SK-N-SH (cell line): ENCODE measurements at regions of chr19 and their contacts with region 1.

Region 1: DNA sequence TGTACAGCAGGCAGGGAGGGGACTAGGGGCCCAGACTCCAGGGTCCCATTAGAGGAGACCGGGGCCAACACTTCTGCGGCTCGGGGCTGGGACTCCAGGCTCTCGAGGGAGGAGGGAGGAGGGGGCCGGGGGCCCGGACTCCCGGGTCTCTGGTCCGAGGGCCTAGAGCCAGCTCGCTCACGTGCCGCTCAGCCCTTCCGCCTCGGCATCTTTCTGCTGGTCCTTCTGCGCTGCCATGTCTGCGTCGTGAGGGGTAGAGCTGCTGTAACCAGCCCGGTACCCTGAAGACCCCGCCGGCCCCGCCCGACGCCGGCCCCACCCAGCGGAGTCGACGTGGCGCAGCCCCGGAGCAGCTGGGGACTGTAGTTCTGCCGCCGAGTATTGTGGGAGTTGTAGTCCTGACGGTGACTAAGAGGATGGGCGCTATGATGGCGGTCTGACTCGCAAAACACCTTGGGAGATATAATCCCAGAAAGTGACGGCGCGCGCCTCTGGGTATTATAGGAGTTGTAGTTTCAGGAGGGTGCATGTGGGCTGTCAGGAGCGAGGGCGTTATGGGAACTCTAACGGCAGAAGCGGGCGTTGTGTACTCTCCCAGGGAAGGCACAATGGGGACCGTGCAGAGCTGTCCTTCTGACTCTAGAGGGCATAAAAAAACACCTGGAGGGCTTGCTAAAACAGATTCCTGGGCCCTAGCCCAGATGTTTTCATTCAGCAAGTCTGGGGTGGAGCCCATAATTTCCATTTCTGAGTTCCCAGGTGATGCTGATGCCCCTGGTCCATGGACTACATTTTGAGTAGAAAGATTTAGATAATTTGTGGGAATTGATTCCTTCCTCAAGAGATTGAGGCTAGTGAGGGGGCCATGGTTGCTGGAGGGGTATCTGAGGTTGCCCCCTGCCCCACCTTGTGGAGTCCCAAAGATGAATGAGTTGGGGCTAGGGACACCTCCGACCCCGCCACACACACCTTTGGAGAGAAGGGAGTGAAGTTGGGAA is at the start of gene RABAC1:
- DNase-seq: peak; percentile 95
- H3K4me3 ChIP-seq: peak within 1 kb of the TSS; percentile 77 to 89
- H3K27ac ChIP-seq: peak within 1 kb of the TSS; percentile 75 to 82
- H3K4me1 ChIP-seq: peaks cover 6 to 10% of the 10 kb centered on the region in 2 experiments; a peak in 2 of 4 replicates
- H3K27me3 ChIP-seq: no peaks in the 10 kb centered on the region
- CTCF ChIP-seq: peak; percentile 34
- EP300 ChIP-seq: no peak
- RAD21 ChIP-seq: no peak; the same call in 1 of the 2 replicates
- polyA plus RNA-seq, gene RABAC1: 252 and 287 TPM in 2 replicates

Region 2: GRCh38 chr19:41859618-41860418 is 99.5 kb before region 1 on chr19 and contains the start of gene RPS19:
- CTCF ChIA-PET with region 1: interaction called, 21 read pairs
- POLR2A ChIA-PET with region 1: interaction called, 14 read pairs
- DNase-seq: peak; percentile 98
- H3K4me3 ChIP-seq: peak within 1 kb of the TSS; percentile 83 to 93
- H3K27ac ChIP-seq: peak within 1 kb of the TSS; percentile 97 to 99
- H3K4me1 ChIP-seq: peaks cover 34 to 39% of the 10 kb centered on the region in 2 experiments
- H3K27me3 ChIP-seq: peaks cover 12% of the 10 kb centered on the region; the same call in 1 of the 2 replicates
- CTCF ChIP-seq: peak; percentile 52
- EP300 ChIP-seq: no peak
- RAD21 ChIP-seq: no peak
- polyA plus RNA-seq, gene RPS19: 2,819 and 3,310 TPM in 2 replicates

Region 3: DNA sequence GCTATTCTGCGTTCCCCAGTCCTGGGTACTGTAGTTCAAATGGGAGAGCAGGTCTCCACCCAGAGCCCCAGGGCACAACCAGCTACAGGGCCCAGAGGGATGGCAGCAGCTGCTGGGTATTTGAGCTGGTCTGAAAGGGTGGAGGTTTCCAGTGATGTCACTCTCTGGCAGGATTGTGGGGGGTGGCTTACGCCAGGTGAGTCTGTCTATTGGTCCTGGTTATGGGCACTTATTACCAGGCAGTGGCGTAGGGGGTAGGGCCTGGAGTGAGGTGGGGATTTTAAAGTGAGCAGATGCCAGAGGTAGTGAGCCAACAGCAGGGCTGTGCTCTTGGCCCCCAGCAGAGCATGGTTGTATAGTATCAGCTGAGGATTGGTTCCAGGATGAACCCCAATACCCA is 93.1 kb before region 1 on chr19:
- CTCF ChIA-PET with region 1: interaction called, 21 read pairs
- POLR2A ChIA-PET with region 1: interaction called, 4 read pairs
- DNase-seq: peak; percentile 15
- H3K4me3 ChIP-seq: no peak overlapping the region
- H3K27ac ChIP-seq: no peak overlapping the region; a peak in 1 of 4 replicates
- H3K4me1 ChIP-seq: peaks cover 32 to 37% of the 10 kb centered on the region in 2 experiments
- H3K27me3 ChIP-seq: no peaks in the 10 kb centered on the region
- CTCF ChIP-seq: no peak
- EP300 ChIP-seq: no peak
- RAD21 ChIP-seq: no peak

Region 4: GRCh38 chr19:41939861-41940730 is 19.3 kb before region 1 on chr19:
- CTCF ChIA-PET with region 1: interaction called, 10 read pairs
- POLR2A ChIA-PET with region 1: no interaction called
- DNase-seq: peak; percentile 87
- H3K4me3 ChIP-seq: peak overlapping the region; percentile 35 to 42; a peak in 3 of 4 replicates
- H3K27ac ChIP-seq: peak overlapping the region in 1 of 2 experiments; percentile 47; a peak in 1 of 4 replicates
- H3K4me1 ChIP-seq: no peaks in the 10 kb centered on the region; a peak in 1 of 4 replicates
- H3K27me3 ChIP-seq: no peaks in the 10 kb centered on the region
- CTCF ChIP-seq: no peak
- EP300 ChIP-seq: no peak
- RAD21 ChIP-seq: no peak

Region 5: DNA sequence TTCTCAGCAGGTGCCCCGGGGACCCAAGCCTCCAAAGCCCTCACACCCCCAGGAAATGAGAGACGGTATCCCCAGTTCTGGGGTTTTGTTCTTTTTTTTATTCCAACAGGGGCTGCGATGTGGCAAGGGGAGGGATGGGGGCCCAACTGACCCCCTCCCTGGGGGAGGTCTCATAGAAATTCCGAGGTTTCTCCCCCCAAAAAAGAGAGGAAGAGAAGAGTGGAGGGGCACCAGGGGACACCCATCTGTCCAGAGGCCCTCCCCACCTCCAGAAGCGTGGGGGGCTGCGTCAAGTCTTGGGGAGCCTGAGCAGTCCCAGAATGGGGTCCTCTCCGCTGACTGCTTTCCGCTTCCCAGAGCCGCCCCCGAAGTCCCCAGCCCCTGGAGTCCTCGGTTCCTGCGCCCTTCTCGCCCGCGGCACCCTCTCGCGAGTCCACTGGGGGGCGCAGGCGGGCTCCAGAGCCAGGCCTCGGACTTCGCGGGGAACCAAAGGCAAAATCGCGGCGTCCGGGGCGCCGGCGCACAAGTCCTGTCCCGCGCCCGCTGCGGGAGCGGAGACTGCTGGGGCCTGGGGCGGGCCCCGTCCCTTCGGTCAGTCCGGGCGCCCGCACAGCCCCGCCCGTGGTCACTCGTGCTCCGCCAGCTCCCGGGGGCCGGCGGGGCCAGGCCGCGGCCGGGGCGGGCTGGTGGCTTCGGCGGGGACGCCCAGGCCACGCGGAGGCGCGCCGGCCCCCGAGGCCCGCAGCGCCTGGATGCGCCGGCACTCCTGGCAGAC is 39.1 kb after region 1 on chr19:
- CTCF ChIA-PET with region 1: interaction called, 18 read pairs
- POLR2A ChIA-PET with region 1: interaction called, 10 read pairs
- DNase-seq: peak; percentile 89
- H3K4me3 ChIP-seq: peak overlapping the region; percentile 34 to 53; a peak in 3 of 4 replicates
- H3K27ac ChIP-seq: peak overlapping the region in 1 of 2 experiments; percentile 98; a peak in 2 of 4 replicates
- H3K4me1 ChIP-seq: peaks cover 0 to 50% of the 10 kb centered on the region in 2 experiments; a peak in 1 of 4 replicates
- H3K27me3 ChIP-seq: peaks cover 54% of the 10 kb centered on the region
- CTCF ChIP-seq: peak; percentile 60
- EP300 ChIP-seq: no peak
- RAD21 ChIP-seq: peak; percentile 54